HEK293 (cell line): ENCODE measurements at regions of chr2 and their contacts with region 1.

Region 1: GRCh38 chr2:177489719-177490301 is 97.2 kb downstream of the AGPS start:
- H3K4me3 ChIP-seq: no peak overlapping the region
- H3K27ac ChIP-seq: no peak overlapping the region
- H3K4me1 ChIP-seq: no peaks in the 10 kb centered on the region
- CTCF ChIP-seq: no peak

Region 2: GRCh38 chr2:177419274-177419673 is 70.5 kb before region 1 on chr2:
- CTCF ChIA-PET with region 1: no interaction called
- POLR2A ChIA-PET with region 1: no interaction called
- H3K4me3 ChIP-seq: no peak overlapping the region
- H3K27ac ChIP-seq: no peak overlapping the region
- H3K4me1 ChIP-seq: no peaks in the 10 kb centered on the region; the same call in 1 of the 2 replicates
- CTCF ChIP-seq: no peak

Region 3: GRCh38 chr2:177501186-177501585 is 11.4 kb after region 1 on chr2:
- CTCF ChIA-PET with region 1: interaction called, 10 read pairs
- POLR2A ChIA-PET with region 1: no interaction called
- H3K4me3 ChIP-seq: no peak overlapping the region
- H3K27ac ChIP-seq: no peak overlapping the region
- H3K4me1 ChIP-seq: no peaks in the 10 kb centered on the region
- CTCF ChIP-seq: no peak

Region 4: DNA sequence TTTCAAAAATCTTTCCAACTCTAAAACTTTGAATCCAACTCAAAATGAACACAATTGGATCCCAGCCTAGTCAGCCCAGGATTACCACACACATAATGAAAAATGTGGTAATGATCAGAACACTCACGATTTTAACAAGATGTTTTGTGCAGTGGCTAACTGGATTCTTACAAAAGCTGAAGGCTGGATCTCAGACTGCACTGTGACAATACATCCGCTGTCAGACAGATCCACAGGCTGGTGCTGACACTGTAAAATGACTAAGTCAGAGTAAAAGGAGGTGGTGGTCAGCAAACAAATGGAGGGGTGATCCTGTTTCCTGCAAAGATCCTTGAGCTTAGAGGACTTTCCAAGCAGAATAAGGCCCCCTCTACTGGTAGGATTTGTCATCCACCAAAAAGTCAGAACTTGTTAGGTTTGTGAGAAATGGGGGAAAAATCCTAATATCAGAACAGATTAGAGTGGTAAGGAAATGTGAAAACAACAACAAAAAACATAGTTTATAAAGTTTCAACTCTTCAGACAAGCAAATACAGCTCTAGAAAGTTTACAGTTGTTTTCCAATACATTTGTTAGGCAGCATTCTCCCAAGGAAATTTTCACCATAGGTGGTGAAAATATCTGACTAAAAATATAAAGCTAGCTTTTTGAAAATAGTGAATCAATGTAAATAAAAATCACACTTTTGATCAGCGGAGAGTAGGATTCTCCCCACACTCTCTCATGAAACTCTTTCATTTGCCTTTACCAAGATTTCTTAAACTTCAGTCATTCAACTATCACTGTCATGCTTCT is 114.7 kb after region 1 on chr2:
- CTCF ChIA-PET with region 1: interaction called, 10 read pairs
- POLR2A ChIA-PET with region 1: no interaction called
- H3K4me3 ChIP-seq: no peak overlapping the region
- H3K27ac ChIP-seq: no peak overlapping the region
- H3K4me1 ChIP-seq: no peaks in the 10 kb centered on the region
- CTCF ChIP-seq: peak; percentile 61

Region 5: GRCh38 chr2:177724398-177725287 is 234.8 kb after region 1 on chr2:
- CTCF ChIA-PET with region 1: interaction called, 18 read pairs
- POLR2A ChIA-PET with region 1: no interaction called
- H3K4me3 ChIP-seq: no peak overlapping the region
- H3K27ac ChIP-seq: no peak overlapping the region
- H3K4me1 ChIP-seq: no peaks in the 10 kb centered on the region; the same call in 1 of the 2 replicates
- CTCF ChIP-seq: peak; percentile 77

Region 6: DNA sequence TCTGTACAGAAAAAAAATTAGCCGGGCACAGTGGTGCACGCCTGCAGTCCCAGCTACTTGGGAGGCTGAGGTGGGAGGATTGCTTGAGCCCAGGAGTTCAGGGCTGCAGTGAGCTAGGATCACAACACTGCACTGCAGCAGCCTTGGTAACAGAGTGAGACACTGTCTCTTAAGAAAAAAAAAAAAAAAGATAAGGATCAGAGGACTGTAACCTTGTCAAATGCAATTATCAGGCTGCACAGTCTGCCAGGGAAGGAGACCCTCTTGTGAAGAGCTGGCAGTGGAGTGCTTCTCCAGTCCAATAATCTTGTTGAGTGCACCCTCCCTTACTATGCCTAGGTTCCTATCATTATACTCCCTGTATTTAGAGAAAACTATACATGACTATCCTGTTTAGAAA is 252.1 kb after region 1 on chr2:
- CTCF ChIA-PET with region 1: interaction called, 11 read pairs
- POLR2A ChIA-PET with region 1: no interaction called
- H3K4me3 ChIP-seq: no peak overlapping the region
- H3K27ac ChIP-seq: no peak overlapping the region
- H3K4me1 ChIP-seq: no peaks in the 10 kb centered on the region
- CTCF ChIP-seq: no peak